MCF 10A (cell line): ENCODE measurements at regions of chr1 and their contacts with region 1.

Region 1: GRCh38 chr1:156020292-156021089 is at the start of gene SSR2:
- DNase-seq: peak; percentile 98
- H3K4me3 Mint-ChIP-seq: peak within 1 kb of the TSS; percentile 97
- H3K27ac Mint-ChIP-seq: peak within 1 kb of the TSS; percentile 86
- H3K4me1 Mint-ChIP-seq: peaks cover 22% of the 10 kb centered on the region
- H3K27me3 Mint-ChIP-seq: no peaks in the 10 kb centered on the region
- CTCF ChIP-seq: no peak
- total RNA-seq, gene SSR2: 477 and 589 TPM in 2 replicates

Region 2: DNA sequence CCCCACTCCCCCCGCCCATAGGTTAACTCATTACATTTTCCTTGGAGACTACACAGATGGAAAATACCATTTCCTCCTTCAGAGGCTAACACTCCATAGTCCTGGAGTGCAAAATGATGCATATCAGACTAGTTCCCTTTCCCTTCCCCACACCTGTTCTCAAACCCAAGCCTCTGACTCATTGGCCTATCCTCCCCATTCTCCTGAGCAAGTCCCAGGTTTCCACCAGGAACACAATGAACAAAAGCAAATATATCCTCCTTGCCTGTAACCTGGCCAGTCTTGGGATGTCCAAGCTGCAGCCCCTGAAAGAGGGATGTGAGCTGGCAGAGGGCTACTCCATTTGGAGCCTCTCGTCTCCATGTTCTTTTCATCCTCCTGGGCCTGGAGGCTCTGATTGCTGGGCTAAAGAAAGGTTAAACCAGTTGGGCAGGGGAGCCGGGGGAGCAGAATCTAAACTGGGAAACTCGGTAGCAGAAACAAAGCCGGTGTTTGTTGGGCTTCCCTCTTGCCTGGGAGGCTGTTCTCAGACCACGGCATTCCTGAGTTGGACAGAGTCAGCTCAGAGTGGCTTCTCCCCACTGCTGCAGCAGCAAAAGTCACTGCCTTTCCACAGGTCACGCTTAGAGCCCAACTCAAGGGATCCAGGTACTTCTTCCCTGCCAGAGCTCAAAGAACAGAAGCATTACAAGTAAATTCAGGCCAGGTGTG is 13.7 kb before region 1 on chr1:
- CTCF ChIA-PET with region 1: interaction called, 5 read pairs
- POLR2A ChIA-PET with region 1: interaction called, 54 read pairs
- intact Hi-C with region 1: no loop called
- DNase-seq: no peak
- H3K4me3 Mint-ChIP-seq: no peak overlapping the region
- H3K27ac Mint-ChIP-seq: peak overlapping the region; percentile 43
- H3K4me1 Mint-ChIP-seq: peaks cover 29% of the 10 kb centered on the region
- H3K27me3 Mint-ChIP-seq: no peaks in the 10 kb centered on the region
- CTCF ChIP-seq: no peak

Region 3: DNA sequence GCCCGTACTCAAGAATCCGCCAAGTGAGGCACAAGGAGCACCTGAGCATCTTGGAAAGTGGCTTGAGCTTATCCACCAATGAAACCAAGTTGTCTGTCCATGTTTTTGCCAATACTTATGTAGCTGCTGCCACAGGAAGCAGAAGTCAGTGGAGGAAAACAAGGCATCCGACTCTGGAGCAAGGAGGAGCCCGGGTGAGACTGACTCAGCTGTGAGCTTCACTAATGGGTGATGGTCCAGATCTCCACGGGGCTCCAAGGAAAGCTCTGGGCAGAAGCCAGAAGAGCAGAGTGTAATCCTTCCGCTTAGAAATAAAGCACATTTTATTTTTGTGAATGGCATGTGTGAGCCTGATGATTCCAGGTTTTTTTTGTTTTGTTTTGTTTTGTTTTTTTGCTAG is 12.5 kb after region 1 on chr1:
- CTCF ChIA-PET with region 1: interaction called, 6 read pairs
- POLR2A ChIA-PET with region 1: interaction called, 24 read pairs
- intact Hi-C with region 1: no loop called
- DNase-seq: no peak
- H3K4me3 Mint-ChIP-seq: no peak overlapping the region
- H3K27ac Mint-ChIP-seq: no peak overlapping the region
- H3K4me1 Mint-ChIP-seq: no peaks in the 10 kb centered on the region
- H3K27me3 Mint-ChIP-seq: no peaks in the 10 kb centered on the region
- CTCF ChIP-seq: no peak